ENCODE measurements at regions of chr3 and their contacts with region 1.

Region 1: DNA sequence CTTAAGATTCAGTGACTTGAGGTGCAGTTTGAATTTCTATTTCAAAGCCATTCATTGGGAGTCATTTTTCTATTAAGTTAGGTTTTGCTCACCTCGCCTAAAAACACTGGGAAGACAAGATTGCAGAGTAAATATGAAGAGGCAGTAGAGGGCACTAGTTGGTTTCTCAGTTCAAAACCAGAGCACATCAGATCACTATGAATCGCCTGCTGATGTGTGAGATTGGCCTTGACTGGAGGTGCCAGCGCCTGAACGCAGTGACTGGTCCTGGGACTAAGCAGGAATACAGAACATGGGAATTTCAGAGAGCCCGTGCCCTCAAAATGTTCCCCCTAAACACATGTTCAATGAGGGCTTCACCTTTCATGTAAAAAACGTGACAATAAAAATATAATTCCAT is 229.0 kb downstream of the ITPR1 start:
- DNase-seq: peak; percentile 73

Region 2: DNA sequence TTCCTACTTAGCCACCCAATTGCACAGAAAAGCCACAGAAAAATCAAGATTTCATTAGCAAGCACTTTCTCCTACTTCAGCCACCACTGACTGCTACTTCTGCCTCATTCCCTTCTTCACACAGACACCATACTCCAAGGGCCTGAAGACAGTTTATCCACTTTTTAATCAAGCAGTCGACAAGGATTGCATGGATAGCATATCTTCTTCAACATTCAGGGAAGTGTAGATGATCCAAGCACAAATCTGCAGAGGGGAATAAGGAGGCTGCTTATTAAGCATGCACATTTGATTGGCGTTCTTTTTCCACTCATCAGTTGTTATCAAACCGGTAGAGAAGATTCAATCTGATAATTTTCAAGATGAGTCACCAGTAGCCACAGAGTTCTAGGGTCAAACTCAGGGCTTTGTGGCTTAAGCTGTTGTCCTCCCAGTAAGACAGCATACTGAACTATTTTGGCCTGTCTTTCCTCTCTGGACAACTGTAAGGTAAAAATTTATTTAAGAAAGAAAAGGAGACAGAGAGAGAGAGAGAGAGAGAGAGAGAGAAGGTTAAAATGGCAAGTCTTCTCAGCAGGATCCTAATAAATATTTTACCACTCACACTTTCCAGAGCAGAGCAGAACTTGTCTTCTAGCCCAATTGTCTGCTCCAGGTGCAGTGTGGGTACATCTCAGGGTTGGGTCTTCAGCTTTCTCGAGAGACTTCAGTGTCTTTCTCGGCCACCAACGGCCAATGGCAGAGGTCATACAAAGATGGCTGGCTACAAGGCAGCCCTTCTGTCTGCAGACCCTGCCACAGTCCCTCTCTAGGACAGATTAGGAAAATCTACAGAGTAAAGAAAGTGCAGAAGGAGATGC is 176.6 kb after region 1 on chr3:
- in situ Hi-C with region 1: no loop called
- DNase-seq: peak; percentile 9

Region 3: DNA sequence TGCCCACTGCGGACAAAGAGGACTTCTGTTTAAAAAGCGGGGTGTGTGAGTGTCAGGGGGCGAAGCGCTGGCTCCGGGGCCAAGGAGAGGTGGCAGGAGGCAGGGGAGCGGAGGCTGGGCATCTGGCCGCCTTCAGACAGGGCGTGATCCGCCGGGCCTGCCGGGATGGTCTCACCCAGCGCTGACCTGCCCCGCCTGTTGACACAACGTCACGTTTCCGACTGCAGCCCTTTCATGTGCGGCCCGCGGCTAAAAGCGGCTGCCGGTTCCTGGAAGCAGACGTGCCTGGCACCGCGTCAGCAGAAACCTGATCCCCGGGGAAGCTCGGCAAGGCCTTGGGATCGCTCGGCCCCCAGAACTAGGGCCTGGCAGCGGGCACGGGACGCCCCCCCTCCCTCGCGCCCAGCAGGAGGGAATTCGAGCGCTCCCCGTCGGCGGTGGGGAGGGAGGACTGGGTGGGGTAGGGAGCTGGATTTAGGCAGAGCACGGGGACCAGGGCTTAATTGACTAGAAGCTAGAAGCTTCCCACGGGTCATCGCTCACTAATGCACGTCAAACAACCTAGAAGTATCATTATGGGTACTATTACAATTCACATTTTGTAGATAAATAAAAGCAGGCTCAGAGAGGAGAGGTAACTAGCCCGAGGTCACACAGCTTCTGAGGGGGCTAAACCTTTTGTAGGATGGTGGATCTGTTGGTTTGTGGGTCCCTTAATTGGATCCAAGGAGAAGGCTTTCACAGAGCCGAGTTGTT is 264.9 kb after region 1 on chr3:
- in situ Hi-C with region 1: loop called (anchors 10 kb)
- DNase-seq: peak; percentile 90

Region 4: GRCh38 chr3:5057857-5058324 is 335.8 kb after region 1 on chr3:
- in situ Hi-C with region 1: loop called (anchors 25 kb)
- DNase-seq: peak; percentile 89